Activated CD8-positive, alpha-beta T cell treated with anti-CD3 and anti-CD28 coated beads, Interleukin-2, amount 10 ng/mL, durations not matched to agents 7 days and 5 days (primary cell): ENCODE measurements at regions of chr5 and their contacts with region 1.

Region 1: DNA sequence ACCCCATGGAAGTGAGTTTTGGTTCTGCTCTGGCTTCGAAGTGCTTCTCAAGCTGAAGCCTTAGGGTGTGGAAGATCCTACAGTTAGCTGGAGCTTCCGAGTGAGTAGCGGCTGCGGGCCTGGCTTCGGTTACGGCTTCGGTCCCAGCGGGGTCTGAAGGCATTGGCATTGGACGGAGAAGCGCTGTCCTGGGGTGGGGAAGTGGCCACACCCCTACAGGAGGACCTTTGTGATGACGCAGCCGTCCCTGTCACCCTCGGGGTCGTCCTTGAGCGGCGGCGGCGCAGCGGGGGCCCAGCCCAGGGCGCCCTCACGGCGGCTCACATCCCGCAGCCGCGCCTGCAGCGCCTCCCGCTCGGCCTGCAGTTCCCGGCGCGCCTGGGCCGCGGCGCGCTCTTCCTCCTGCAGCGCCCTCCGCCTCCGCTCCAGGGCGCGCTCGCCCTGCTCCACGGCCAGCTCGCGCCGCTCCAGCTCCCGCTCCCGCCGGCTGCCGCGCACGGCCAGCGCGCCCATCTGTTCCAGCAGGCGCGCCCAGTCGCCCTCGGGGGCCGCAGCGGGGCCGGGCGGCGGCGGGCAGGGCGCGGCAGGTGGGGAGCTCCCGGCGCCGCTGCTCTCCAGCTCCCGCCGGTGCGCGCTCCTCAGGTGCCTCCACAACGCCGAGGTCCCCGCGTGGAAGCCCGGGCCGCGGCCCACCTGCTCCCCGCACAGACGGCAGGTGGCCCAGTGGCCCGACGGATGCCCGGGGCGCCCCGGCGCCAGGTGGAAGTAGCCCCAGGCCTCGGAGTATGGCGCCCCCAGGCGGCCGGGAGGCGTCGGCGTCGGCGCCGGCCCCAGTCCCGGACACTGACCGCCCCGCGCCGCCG is 9.9 kb downstream of the ZBED3 start:
- DNase-seq: peak; percentile 68
- ATAC-seq: peak; percentile 89
- H3K4me3 Mint-ChIP-seq: peak overlapping the region; percentile 52
- H3K27ac Mint-ChIP-seq: no peak overlapping the region
- H3K4me1 Mint-ChIP-seq: peaks cover 6% of the 10 kb centered on the region
- H3K27me3 Mint-ChIP-seq: peaks cover 2% of the 10 kb centered on the region

Region 2: DNA sequence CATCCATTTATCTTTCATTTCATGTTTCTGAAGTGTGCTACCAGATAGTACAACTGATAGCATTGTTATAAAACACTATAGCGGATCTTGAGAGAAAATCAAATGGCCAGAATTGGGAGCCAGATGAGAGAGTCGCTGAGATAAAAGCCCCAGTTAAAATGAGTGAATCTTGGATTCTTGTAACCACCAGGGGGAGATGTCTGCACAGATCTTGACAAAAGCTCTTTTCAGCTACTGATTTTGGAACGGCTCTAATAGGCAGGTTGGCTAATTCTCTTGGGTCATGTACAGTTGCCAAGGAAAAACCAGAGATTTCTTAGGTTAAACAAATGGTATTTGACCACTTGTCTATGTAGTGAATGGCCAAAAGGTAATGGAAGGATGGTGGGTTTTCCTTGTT is 475.7 kb before region 1 on chr5:
- CTCF ChIA-PET with region 1: no interaction called
- POLR2A ChIA-PET with region 1: no interaction called
- DNase-seq: peak; percentile 50
- ATAC-seq: peak; percentile 64
- H3K4me3 Mint-ChIP-seq: no peak overlapping the region
- H3K27ac Mint-ChIP-seq: no peak overlapping the region
- H3K4me1 Mint-ChIP-seq: no peaks in the 10 kb centered on the region
- H3K27me3 Mint-ChIP-seq: no peaks in the 10 kb centered on the region

Region 3: DNA sequence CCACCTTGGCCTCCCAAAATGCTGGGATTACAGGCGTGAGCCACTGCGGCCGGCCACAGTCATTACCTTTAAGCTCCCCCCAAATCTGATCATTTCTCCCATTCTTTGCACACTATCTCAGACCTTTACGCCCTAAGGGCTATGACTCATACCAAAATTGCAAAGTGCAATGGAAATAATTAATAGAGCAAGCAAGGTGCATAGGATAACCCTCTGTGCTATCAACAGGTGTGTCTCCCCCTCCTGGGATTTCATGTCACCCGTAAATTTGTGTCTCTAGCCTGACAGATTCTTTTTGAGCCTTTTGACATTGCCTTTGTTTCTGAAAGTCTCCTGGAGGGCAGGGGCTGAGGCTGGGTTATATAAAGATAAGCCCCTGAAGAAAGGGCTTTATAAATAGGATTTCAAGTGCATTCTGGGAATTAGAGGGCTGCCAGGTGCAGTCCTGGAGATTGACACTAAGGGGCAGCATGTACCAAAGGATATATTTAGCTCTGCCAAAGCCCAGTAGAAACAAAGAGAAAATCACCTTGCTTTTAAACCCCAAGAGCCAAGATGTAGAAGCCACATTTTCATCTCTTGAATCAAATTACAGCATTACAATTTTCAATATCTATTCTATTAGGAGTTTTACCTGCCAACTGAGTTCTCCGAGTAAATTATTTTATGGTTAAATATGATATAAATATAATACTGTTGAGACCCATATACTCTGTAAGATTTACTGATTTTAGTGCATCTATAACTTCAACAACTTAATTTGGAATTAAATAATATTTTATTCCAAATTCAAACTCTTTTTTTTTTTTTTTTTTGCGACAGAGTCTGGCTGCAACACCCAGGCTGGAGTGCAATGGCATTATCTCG is 209.1 kb before region 1 on chr5:
- CTCF ChIA-PET with region 1: interaction called, 10 read pairs
- POLR2A ChIA-PET with region 1: no interaction called
- DNase-seq: peak; percentile 80
- ATAC-seq: peak; percentile 76
- H3K4me3 Mint-ChIP-seq: no peak overlapping the region
- H3K27ac Mint-ChIP-seq: no peak overlapping the region
- H3K4me1 Mint-ChIP-seq: peaks cover 4% of the 10 kb centered on the region
- H3K27me3 Mint-ChIP-seq: no peaks in the 10 kb centered on the region

Region 4: GRCh38 chr5:77030097-77031071 is 46.8 kb before region 1 on chr5 and contains the start of gene AGGF1:
- CTCF ChIA-PET with region 1: interaction called, 32 read pairs
- POLR2A ChIA-PET with region 1: interaction called, 5 read pairs
- DNase-seq: peak; percentile 96
- ATAC-seq: peak; percentile 98
- H3K4me3 Mint-ChIP-seq: peak within 1 kb of the TSS; percentile 94
- H3K27ac Mint-ChIP-seq: peak within 1 kb of the TSS; percentile 95
- H3K4me1 Mint-ChIP-seq: peaks cover 36% of the 10 kb centered on the region
- H3K27me3 Mint-ChIP-seq: no peaks in the 10 kb centered on the region
- total RNA-seq, gene AGGF1: 27.2 to 28.4 TPM

Region 5: DNA sequence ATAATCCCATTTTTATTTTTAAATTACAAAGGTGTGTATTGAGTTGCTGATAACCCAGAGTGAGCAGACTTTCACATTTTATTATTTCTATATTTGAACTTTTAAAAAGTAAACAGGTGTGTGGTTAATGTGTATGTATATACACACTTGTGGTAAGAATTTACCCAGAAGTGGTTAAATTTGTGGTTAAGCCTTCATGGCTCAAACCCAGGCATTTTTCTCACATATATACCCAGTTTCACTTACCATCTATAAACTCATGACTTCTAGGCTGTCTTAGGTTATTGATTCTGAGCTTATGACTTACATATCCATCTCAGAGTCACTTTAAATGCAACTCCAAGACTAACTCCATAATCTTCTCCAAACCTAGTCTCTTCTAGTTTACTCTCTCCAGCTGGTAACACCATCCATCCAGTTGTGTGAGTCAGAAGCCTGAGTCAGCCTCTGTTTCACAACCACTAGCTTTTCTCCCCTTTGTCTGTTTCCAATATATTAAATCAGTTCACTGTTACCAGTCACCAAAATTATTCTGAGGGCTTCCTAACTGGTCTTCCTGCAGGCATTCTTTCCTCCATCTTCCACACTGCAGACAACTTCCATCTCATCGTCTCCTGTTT is 10.3 kb before region 1 on chr5:
- CTCF ChIA-PET with region 1: interaction called, 20 read pairs
- POLR2A ChIA-PET with region 1: no interaction called
- DNase-seq: no peak
- ATAC-seq: peak; percentile 33
- H3K4me3 Mint-ChIP-seq: no peak overlapping the region
- H3K27ac Mint-ChIP-seq: no peak overlapping the region
- H3K4me1 Mint-ChIP-seq: peaks cover 13% of the 10 kb centered on the region
- H3K27me3 Mint-ChIP-seq: no peaks in the 10 kb centered on the region